ENCODE measurements at regions of chr3 and their contacts with region 1.

Region 1: DNA sequence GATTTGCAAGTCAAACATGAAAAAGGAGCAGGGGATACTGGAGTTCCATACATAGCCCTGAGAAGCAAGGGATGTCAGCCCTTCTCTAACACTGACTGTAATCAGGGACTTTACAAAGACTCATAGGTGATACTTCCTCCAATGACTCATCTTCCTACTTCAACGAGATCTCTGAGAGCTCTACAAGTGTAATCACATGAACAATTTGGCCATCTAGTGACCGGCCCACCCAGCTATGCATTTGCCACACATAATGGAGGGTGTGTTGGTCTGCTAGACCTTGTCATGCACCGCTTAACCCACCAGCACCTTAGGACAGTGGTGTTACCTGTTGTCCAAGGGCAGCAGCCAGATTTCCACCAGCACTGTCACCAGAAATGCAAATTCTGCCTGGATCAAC is 75.3 kb downstream of the NCEH1 start:
- DNase-seq: no peak
- ATAC-seq: peak; percentile 68
- H3K4me3 ChIP-seq: no peak overlapping the region
- H3K27ac ChIP-seq: no peak overlapping the region
- H3K4me1 ChIP-seq: no peaks in the 10 kb centered on the region
- H3K27me3 ChIP-seq: no peaks in the 10 kb centered on the region
- CTCF ChIP-seq: no peak

Region 2: DNA sequence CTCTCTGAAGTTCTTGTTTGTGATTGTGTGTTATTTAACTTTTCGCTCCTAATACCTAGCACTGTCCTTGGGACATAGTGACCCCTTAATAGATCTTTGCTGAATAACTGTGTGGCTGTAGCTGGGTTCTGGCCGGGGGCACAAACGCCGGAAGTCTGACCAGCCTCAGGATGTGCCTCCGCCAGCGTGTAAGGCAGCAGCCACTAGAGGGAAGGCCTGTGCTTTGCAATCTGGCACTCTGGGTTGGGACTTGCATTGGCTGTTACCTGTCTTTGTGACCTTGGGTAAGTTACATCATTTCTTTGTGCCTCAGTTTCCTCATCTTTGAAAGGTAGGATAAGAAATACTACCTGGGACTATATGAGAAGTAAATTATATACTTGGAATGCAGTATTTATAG is 346.0 kb before region 1 on chr3:
- CTCF ChIA-PET with region 1: no interaction called
- POLR2A ChIA-PET with region 1: no interaction called
- in situ Hi-C with region 1: no loop called
- intact Hi-C with region 1: no loop called
- DNase-seq: no peak
- ATAC-seq: peak; percentile 68
- H3K4me3 ChIP-seq: no peak overlapping the region
- H3K27ac ChIP-seq: no peak overlapping the region
- H3K4me1 ChIP-seq: peaks cover 6% of the 10 kb centered on the region
- H3K27me3 ChIP-seq: no peaks in the 10 kb centered on the region
- CTCF ChIP-seq: peak; percentile 59

Region 3: DNA sequence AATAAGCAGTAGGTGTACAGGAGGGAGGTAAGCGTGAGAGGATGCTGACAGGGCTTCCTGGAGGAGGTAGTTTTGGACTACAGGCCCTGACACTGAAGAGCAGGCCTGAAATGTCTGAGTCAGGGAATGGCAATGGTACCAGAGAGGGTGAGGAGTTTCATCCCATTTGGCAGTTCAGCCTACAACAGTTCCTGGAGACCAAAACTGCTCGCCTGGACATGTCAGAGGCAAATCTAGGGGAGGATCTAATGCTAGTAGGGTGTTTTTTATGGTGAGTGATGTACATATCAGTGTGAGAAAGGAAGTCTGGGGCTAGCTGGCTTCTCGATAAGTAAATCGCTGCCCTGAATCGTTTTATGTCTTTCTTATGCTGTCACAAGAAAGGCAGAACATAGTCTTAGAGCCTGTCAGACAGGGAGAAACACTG is 98.6 kb before region 1 on chr3:
- CTCF ChIA-PET with region 1: no interaction called
- POLR2A ChIA-PET with region 1: no interaction called
- in situ Hi-C with region 1: no loop called
- intact Hi-C with region 1: no loop called
- DNase-seq: no peak
- ATAC-seq: no peak
- H3K4me3 ChIP-seq: no peak overlapping the region
- H3K27ac ChIP-seq: no peak overlapping the region
- H3K4me1 ChIP-seq: no peaks in the 10 kb centered on the region
- H3K27me3 ChIP-seq: no peaks in the 10 kb centered on the region
- CTCF ChIP-seq: no peak

Region 4: DNA sequence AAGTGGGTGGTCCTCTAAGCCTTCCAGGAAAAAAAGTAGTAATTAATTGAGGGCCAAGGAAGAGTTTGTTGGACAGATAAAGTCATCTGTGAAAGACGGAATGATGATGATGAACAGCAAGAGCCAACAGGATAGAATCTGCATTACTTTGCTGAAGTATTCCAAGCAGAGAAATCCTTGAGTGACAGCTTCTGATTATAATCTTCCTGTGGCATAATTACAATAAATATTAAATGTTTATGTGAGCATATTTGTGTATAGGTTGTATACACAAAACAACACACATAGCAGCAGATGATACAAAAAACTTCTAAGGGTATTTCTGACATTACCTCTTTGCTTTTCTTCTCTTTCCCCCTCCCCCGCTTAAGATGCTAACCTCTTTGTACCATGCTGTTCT is 357.8 kb after region 1 on chr3:
- CTCF ChIA-PET with region 1: no interaction called
- POLR2A ChIA-PET with region 1: no interaction called
- in situ Hi-C with region 1: no loop called
- intact Hi-C with region 1: no loop called
- DNase-seq: no peak
- ATAC-seq: no peak
- H3K4me3 ChIP-seq: no peak overlapping the region
- H3K27ac ChIP-seq: no peak overlapping the region
- H3K4me1 ChIP-seq: no peaks in the 10 kb centered on the region
- H3K27me3 ChIP-seq: peaks cover 4% of the 10 kb centered on the region; the same call in 1 of the 2 replicates
- CTCF ChIP-seq: no peak

Region 5: GRCh38 chr3:173138026-173138425 is 502.4 kb after region 1 on chr3:
- CTCF ChIA-PET with region 1: no interaction called
- POLR2A ChIA-PET with region 1: interaction called, 12 read pairs
- in situ Hi-C with region 1: no loop called
- intact Hi-C with region 1: no loop called
- DNase-seq: no peak
- ATAC-seq: no peak
- H3K4me3 ChIP-seq: no peak overlapping the region
- H3K27ac ChIP-seq: no peak overlapping the region
- H3K4me1 ChIP-seq: no peaks in the 10 kb centered on the region
- H3K27me3 ChIP-seq: no peaks in the 10 kb centered on the region
- CTCF ChIP-seq: no peak